A673 (cell line): ENCODE measurements at regions of chr4 and their contacts with region 1.

Region 1: GRCh38 chr4:26719954-26720552 is 136.2 kb downstream of the TBC1D19 start:
- DNase-seq: peak; percentile 60
- H3K4me3 ChIP-seq: no peak overlapping the region
- H3K27ac ChIP-seq: no peak overlapping the region
- H3K4me1 ChIP-seq: no peaks in the 10 kb centered on the region
- H3K27me3 ChIP-seq: no peaks in the 10 kb centered on the region
- CTCF ChIP-seq: peak; percentile 75

Region 2: GRCh38 chr4:26213317-26213716 is 506.7 kb before region 1 on chr4:
- CTCF ChIA-PET with region 1: no interaction called
- POLR2A ChIA-PET with region 1: interaction called, 10 read pairs
- intact Hi-C with region 1: no loop called
- DNase-seq: no peak
- H3K4me3 ChIP-seq: no peak overlapping the region
- H3K27ac ChIP-seq: no peak overlapping the region
- H3K4me1 ChIP-seq: no peaks in the 10 kb centered on the region
- H3K27me3 ChIP-seq: peaks cover 50% of the 10 kb centered on the region
- CTCF ChIP-seq: no peak

Region 3: GRCh38 chr4:26372525-26373172 is 347.4 kb before region 1 on chr4:
- CTCF ChIA-PET with region 1: no interaction called
- POLR2A ChIA-PET with region 1: no interaction called
- intact Hi-C with region 1: no loop called
- DNase-seq: peak; percentile 76
- H3K4me3 ChIP-seq: no peak overlapping the region
- H3K27ac ChIP-seq: peak overlapping the region; percentile 27
- H3K4me1 ChIP-seq: peaks cover 41% of the 10 kb centered on the region
- H3K27me3 ChIP-seq: no peaks in the 10 kb centered on the region
- CTCF ChIP-seq: no peak

Region 4: GRCh38 chr4:26424838-26425237 is 295.2 kb before region 1 on chr4:
- CTCF ChIA-PET with region 1: no interaction called
- POLR2A ChIA-PET with region 1: no interaction called
- intact Hi-C with region 1: loop called (anchors 5 kb)
- DNase-seq: peak; percentile 13
- H3K4me3 ChIP-seq: no peak overlapping the region
- H3K27ac ChIP-seq: no peak overlapping the region
- H3K4me1 ChIP-seq: no peaks in the 10 kb centered on the region
- H3K27me3 ChIP-seq: no peaks in the 10 kb centered on the region
- CTCF ChIP-seq: peak; percentile 57

Region 5: DNA sequence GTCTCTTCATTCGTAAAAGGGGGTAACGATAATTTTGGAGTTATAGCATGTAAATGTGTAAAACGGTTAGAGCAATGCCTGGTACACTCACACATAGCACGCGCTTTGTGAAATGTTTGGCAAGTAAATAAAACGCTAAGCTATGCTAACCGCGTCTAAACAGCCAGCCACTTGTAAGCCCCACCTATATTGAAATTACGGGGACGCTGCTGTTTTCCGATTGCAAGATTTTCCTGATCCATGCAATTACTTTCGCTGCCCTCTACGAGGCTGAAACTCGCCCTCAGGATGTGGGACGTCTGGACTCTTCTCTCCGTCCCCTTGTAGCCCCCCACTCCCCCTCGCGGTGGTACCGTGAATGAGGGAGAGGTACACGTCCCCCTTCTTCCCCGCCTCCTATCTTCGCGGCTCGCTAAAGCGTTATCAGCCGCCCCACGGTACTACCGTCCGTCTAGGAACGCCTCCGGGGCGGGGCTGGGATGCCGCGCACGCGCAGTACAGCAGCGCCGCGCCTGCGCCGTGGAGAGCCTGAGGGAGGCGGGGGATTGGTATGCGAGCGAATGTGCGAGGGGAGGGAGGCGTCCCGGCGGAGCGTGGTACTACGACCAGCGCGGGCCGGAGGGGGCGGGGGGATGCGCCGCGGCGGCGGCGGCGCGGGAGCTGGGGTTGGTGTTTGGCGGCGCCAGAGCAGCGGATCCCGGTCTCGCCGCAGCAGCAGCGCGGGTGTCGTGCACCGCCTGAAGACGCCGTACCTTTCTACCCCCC is 140.3 kb after region 1 on chr4 and contains the start of gene STIM2:
- CTCF ChIA-PET with region 1: interaction called, 4 read pairs
- POLR2A ChIA-PET with region 1: no interaction called
- intact Hi-C with region 1: loop called (anchors 10 kb)
- DNase-seq: peak; percentile 99
- H3K4me3 ChIP-seq: peak within 1 kb of the TSS; percentile 85
- H3K27ac ChIP-seq: peak within 1 kb of the TSS; percentile 88
- H3K4me1 ChIP-seq: peaks cover 52% of the 10 kb centered on the region
- H3K27me3 ChIP-seq: no peaks in the 10 kb centered on the region
- CTCF ChIP-seq: peak; percentile 61
- total RNA-seq, gene STIM2: 56.1 and 59.0 TPM in 2 replicates